ENCODE measurements at regions of chr6 and their contacts with region 1.

Region 1: GRCh38 chr6:16277101-16277981 is 39.0 kb downstream of the GMPR start:
- DNase-seq: peak; percentile 71
- ATAC-seq: peak; percentile 90

Region 2: DNA sequence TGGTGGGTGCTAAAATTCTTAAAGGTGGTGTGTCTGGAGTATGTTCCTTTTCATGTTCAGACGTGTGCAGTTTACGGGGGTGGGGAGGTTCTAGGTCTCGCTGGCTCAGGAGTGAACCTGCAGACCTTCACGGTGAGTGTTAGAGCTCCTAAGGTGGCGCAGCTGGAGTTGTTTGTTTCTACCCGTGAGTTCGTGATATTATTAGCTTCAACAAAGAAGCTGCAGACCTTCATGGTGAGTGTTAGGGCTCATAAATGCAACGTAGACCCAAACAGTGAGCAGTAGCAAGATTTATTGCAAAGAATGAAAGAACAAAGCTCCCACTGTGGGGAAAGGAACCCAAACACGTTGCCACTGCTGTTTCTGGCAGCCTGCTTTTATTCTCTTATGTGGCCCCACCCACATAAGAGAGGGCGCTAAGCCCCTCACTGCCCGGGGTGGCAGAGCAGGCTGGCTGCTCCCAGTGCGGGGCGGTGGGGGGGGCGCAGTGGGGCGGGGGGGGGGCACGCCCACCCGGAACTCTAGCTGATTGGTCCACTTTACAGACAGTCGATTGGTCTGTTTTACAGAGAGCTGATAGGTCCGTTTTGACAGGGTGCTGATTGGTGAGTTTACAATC is 80.3 kb before region 1 on chr6:
- intact Hi-C with region 1: no loop called
- DNase-seq: no peak
- ATAC-seq: no peak

Region 3: GRCh38 chr6:16238057-16238962 is 39.0 kb before region 1 on chr6 and contains the start of gene GMPR:
- intact Hi-C with region 1: loop called (anchors 5 kb)
- DNase-seq: peak; percentile 90
- ATAC-seq: peak; percentile 81
- total RNA-seq, gene GMPR: 121 TPM

Measured in Right ventricle myocardium superior (tissue), 1 donor.